ENCODE measurements at regions of chr4 and their contacts with region 1.

Region 1: GRCh38 chr4:116180157-116180601 is 905.2 kb downstream of the TRAM1L1 start:
- DNase-seq: peak; percentile 73
- H3K4me3 ChIP-seq: peak overlapping the region; percentile 31
- H3K27ac ChIP-seq: peak overlapping the region; percentile 97
- H3K4me1 ChIP-seq: peaks cover 58% of the 10 kb centered on the region
- H3K27me3 ChIP-seq: no peaks in the 10 kb centered on the region
- CTCF ChIP-seq: peak; percentile 78

Region 2: GRCh38 chr4:115119804-115120352 is 1060.3 kb before region 1 on chr4:
- CTCF ChIA-PET with region 1: no interaction called
- POLR2A ChIA-PET with region 1: no interaction called
- intact Hi-C with region 1: loop called (anchors 5 kb)
- DNase-seq: peak; percentile 67
- H3K4me3 ChIP-seq: no peak overlapping the region
- H3K27ac ChIP-seq: peak overlapping the region; percentile 25
- H3K4me1 ChIP-seq: peaks cover 45% of the 10 kb centered on the region
- H3K27me3 ChIP-seq: no peaks in the 10 kb centered on the region
- CTCF ChIP-seq: peak; percentile 52

Region 3: GRCh38 chr4:115781528-115782146 is 398.5 kb before region 1 on chr4:
- CTCF ChIA-PET with region 1: no interaction called
- POLR2A ChIA-PET with region 1: no interaction called
- intact Hi-C with region 1: no loop called
- DNase-seq: peak; percentile 57
- H3K4me3 ChIP-seq: no peak overlapping the region
- H3K27ac ChIP-seq: peak overlapping the region; percentile 56
- H3K4me1 ChIP-seq: peaks cover 15% of the 10 kb centered on the region
- H3K27me3 ChIP-seq: no peaks in the 10 kb centered on the region
- CTCF ChIP-seq: no peak

Region 4: DNA sequence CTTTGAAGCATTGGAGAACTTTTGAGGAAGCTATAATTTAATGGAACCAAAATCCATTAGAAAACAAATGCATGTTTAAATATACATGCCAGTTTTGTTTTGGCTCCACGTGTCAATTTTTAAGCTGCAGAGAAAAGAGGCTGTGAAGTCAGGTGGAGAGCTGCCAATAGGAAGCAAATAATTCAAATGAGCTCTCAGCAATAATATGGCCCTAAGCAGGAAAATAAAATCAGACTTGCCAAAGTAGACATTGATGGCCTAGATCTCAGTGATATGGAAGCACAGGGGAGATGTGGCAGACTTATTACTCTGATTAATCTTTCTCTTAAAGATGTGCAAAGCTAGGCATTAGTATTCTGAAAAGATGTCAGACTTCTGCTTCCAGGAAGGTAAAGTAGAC is 296.9 kb before region 1 on chr4:
- CTCF ChIA-PET with region 1: no interaction called
- POLR2A ChIA-PET with region 1: no interaction called
- intact Hi-C with region 1: loop called (anchors 5 kb)
- DNase-seq: peak; percentile 84
- H3K4me3 ChIP-seq: no peak overlapping the region
- H3K27ac ChIP-seq: peak overlapping the region; percentile 86
- H3K4me1 ChIP-seq: peaks cover 38% of the 10 kb centered on the region
- H3K27me3 ChIP-seq: no peaks in the 10 kb centered on the region
- CTCF ChIP-seq: no peak

Region 5: GRCh38 chr4:116531870-116532269 is 351.7 kb after region 1 on chr4:
- CTCF ChIA-PET with region 1: no interaction called
- POLR2A ChIA-PET with region 1: no interaction called
- intact Hi-C with region 1: loop called (anchors 2 kb)
- DNase-seq: peak; percentile 99
- H3K4me3 ChIP-seq: no peak overlapping the region
- H3K27ac ChIP-seq: peak overlapping the region; percentile 96
- H3K4me1 ChIP-seq: peaks cover 47% of the 10 kb centered on the region
- H3K27me3 ChIP-seq: no peaks in the 10 kb centered on the region
- CTCF ChIP-seq: no peak

Region 6: GRCh38 chr4:117549524-117549923 is 1369.3 kb after region 1 on chr4:
- CTCF ChIA-PET with region 1: no interaction called
- POLR2A ChIA-PET with region 1: no interaction called
- intact Hi-C with region 1: loop called (anchors 5 kb)
- DNase-seq: peak; percentile 4
- H3K4me3 ChIP-seq: no peak overlapping the region
- H3K27ac ChIP-seq: no peak overlapping the region
- H3K4me1 ChIP-seq: no peaks in the 10 kb centered on the region
- H3K27me3 ChIP-seq: no peaks in the 10 kb centered on the region
- CTCF ChIP-seq: no peak

Region 7: GRCh38 chr4:118034053-118034785 is 1854.0 kb after region 1 on chr4 and contains the start of gene NDST3:
- CTCF ChIA-PET with region 1: no interaction called
- POLR2A ChIA-PET with region 1: no interaction called
- intact Hi-C with region 1: loop called (anchors 5 kb)
- DNase-seq: peak; percentile 89
- H3K4me3 ChIP-seq: peak within 1 kb of the TSS; percentile 70
- H3K27ac ChIP-seq: no peak within 1 kb of the TSS
- H3K4me1 ChIP-seq: peaks cover 6% of the 10 kb centered on the region
- H3K27me3 ChIP-seq: no peaks in the 10 kb centered on the region
- CTCF ChIP-seq: peak; percentile 77
- total RNA-seq, gene NDST3: 2.6 and 3.0 TPM in 2 replicates